ENCODE measurements at regions of chr21 and their contacts with region 1.

Region 1: GRCh38 chr21:40143822-40144525 is 276.7 kb downstream of the PCP4 start:
- H3K4me3 Mint-ChIP-seq: no peak overlapping the region
- H3K27ac Mint-ChIP-seq: no peak overlapping the region
- H3K4me1 Mint-ChIP-seq: no peaks in the 10 kb centered on the region
- H3K27me3 Mint-ChIP-seq: no peaks in the 10 kb centered on the region

Region 2: GRCh38 chr21:40095477-40095876 is 48.5 kb before region 1 on chr21:
- intact Hi-C with region 1: no loop called
- H3K4me3 Mint-ChIP-seq: no peak overlapping the region
- H3K27ac Mint-ChIP-seq: no peak overlapping the region
- H3K4me1 Mint-ChIP-seq: no peaks in the 10 kb centered on the region
- H3K27me3 Mint-ChIP-seq: no peaks in the 10 kb centered on the region

Region 3: GRCh38 chr21:40385892-40386599 is 242.1 kb after region 1 on chr21:
- intact Hi-C with region 1: loop called (anchors 2 kb)
- H3K4me3 Mint-ChIP-seq: no peak overlapping the region
- H3K27ac Mint-ChIP-seq: no peak overlapping the region
- H3K4me1 Mint-ChIP-seq: peaks cover 4% of the 10 kb centered on the region
- H3K27me3 Mint-ChIP-seq: no peaks in the 10 kb centered on the region

Region 4: DNA sequence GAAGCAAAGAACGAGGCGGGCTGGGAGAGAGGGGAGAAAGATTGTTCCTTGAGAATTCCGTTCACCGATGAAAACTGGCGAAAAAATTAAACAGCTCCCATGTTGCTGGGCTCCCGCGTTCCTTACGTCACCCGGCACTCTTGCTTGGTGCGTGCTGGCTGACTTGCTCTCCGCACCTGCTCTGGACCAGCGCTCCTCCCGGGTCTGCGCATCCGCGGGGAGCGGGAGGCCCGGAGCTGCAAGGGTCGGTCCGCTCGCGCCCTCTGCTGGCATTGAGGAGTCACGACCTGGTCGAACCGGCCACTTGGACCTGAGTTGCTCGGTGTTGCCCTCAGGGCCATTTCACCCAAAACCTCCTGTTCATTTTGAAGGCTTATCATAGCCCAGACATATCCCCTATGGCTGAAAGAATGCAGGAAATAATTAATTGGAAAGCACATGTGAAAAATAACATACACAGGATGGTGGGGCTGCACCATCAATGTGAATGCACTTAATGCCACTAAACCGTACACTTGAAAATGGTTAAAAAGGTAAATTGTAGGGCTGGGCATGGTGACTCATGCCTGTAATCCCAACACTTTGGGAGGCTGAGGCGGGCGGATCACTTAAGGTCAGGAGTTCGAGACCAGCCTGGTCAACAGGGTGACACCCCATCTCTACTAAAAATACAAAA is 925.1 kb after region 1 on chr21:
- intact Hi-C with region 1: loop called (anchors 1 kb)
- H3K4me3 Mint-ChIP-seq: peak overlapping the region; percentile 44
- H3K27ac Mint-ChIP-seq: no peak overlapping the region
- H3K4me1 Mint-ChIP-seq: peaks cover 10% of the 10 kb centered on the region
- H3K27me3 Mint-ChIP-seq: peaks cover 21% of the 10 kb centered on the region

Region 5: DNA sequence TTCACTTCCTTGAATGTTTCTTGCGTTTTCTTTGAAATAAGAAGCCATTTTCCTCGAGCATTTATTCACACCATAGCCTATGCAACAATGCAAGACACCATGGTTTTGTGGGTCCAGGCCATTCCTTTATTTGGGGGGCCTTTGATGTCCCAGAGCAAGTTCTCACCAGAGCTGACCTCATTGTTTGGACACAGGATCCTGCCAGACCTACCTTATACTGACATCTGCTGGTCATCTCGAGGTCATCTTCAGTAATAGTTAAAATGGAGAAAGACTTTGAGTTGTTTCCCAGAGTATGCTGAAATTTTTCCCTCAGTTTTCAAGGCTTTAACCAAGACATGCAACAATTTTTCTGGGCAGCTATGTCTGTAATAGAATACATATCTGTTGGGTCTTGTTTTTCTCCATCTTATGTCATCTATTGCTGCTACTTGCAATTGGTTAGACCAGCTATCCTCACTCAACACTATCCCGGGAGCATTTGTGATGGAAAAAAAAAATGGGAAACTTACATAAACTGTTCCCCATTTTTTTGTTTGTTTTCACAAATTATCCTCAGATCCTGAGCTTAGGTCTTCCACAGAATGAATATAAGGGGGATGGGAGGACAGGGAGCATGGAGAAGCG is 990.0 kb after region 1 on chr21:
- intact Hi-C with region 1: loop called (anchors 2 kb)
- H3K4me3 Mint-ChIP-seq: no peak overlapping the region
- H3K27ac Mint-ChIP-seq: no peak overlapping the region
- H3K4me1 Mint-ChIP-seq: no peaks in the 10 kb centered on the region
- H3K27me3 Mint-ChIP-seq: peaks cover 5% of the 10 kb centered on the region